Sigmoid colon (tissue), 7 donors: ENCODE measurements at regions of chr3 and their contacts with region 1.

Region 1: DNA sequence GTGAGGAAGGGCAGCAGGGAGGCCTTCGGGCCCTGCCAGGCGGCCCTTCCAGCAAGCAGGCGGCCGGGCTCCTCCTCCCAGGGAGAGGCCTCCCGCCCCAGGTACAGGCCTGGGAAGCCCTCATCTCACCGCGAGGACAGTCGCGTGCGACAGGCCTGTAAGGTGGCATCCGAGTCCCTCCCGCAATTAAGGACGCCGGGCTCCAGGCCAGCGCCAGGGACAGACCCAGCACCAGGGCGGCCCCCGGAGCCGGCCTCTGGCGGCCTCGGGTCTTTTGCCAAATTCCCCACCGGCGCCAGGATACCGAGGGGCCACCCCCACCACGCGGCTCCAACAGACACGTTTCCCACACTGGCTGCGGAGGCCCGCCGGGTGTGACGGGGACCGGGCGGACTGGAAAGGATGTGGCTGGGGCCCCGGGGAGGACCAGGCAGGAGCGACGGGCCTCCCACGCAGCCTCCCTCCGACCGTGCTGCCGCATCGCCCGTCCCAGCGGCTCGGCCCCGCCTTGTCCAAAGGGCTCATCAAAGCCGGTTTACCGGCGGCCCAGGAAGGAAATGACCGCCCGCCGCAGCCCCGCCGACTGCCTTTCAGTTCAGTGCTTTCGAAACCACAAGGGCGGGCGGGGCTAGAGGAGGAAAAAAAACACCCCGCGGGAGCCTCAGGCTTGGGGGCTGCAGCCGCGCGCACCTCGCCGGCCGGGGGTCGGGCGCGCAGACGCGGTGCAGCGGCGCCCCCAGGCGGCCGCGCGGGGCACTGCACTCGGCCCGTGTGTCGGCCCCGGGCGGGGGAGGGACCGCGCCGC is 11.3 kb downstream of the XXYLT1 start:
- DNase-seq: peak; percentile 98
- H3K4me3 ChIP-seq: peak overlapping the region; percentile 61 to 75 (median 68)
- H3K27ac ChIP-seq: peak overlapping the region; percentile 87 to 97 (median 94)
- H3K4me1 ChIP-seq: peaks cover 0 to 39% (median 37%) of the 10 kb centered on the region in 4 donors
- H3K27me3 ChIP-seq: no peaks in the 10 kb centered on the region
- CTCF ChIP-seq: peak in 1 of 4 experiments; percentile 63
- EP300 ChIP-seq: no peak
- POLR2A ChIP-seq: peak; percentile 65 to 66

Region 2: DNA sequence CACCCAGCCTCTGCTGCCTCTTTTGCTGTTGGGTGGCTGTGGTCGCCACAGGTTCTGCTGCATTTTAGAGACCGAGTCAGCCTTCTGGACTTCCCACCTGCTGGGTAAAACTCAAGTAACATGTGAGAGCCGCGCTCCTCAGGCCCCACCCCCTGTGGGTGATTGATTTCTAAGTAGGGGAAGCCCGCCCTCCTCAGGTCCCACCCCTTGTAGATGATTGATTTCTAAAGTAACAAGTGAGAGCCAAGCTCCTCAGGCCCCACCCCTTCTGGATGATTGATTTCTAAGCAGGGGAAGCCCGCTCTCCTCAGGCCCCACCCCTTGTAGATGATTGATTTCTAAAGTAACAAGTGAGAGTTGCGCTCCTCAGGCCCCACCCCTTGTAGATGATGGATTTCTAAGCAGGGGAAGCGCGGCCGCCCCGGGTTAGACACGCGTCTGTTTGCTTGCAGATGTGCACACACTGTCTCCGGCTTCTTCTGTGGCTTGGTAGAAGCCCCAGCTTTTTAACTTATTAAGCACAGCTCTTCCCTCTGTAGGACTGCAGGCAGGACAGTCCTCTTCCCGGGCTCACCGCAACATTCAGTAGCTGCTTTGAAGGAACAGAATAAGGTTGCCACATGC is 490.5 kb before region 1 on chr3:
- intact Hi-C with region 1: loop called (anchors 5 kb)
- DNase-seq: peak; percentile 98
- H3K4me3 ChIP-seq: peak overlapping the region in 3 of 4 donors; percentile 33 to 43 (median 41)
- H3K27ac ChIP-seq: peak overlapping the region; percentile 47 to 60 (median 50)
- H3K4me1 ChIP-seq: peaks cover 0 to 14% (median 10%) of the 10 kb centered on the region in 4 donors
- H3K27me3 ChIP-seq: no peaks in the 10 kb centered on the region
- CTCF ChIP-seq: no peak
- EP300 ChIP-seq: no peak
- POLR2A ChIP-seq: no peak

Region 3: DNA sequence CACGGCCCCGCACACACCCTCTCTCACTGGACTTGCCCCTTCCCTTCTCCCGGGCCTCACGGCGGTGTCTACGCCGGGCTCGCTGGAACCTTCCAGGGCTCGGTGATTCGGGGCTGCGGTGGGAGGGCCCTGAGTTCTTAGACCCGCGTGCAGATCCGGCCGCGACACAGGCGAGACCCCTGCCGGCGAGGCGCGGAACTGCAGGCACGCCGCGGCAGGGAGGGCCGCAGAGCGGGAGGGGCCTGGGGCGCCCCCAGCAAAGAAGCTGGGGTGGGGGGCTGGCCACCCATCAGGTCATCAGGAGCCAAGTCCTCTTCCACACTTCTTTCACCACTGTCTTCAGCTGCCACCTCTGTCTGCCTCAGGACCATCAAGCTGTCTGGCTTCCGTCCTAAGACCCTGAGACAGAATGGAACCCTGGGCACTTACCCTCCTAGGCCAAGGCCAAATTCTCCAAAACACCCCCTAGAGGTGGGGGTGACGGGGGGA is 153.2 kb before region 1 on chr3:
- intact Hi-C with region 1: loop called (anchors 2 kb)
- DNase-seq: peak; percentile 86
- H3K4me3 ChIP-seq: peak overlapping the region in 1 of 4 donors; percentile 25
- H3K27ac ChIP-seq: peak overlapping the region in 2 of 4 donors; percentile 31 to 39
- H3K4me1 ChIP-seq: peaks cover 0 to 30% (median 18%) of the 10 kb centered on the region in 4 donors
- H3K27me3 ChIP-seq: no peaks in the 10 kb centered on the region
- CTCF ChIP-seq: peak; percentile 97 to 100 (median 99)
- EP300 ChIP-seq: no peak
- POLR2A ChIP-seq: no peak

Region 4: GRCh38 chr3:195154793-195155535 is 104.7 kb before region 1 on chr3:
- intact Hi-C with region 1: loop called (anchors 1 kb)
- DNase-seq: peak; percentile 98
- H3K4me3 ChIP-seq: peak overlapping the region in 3 of 4 donors; percentile 22 to 27 (median 27)
- H3K27ac ChIP-seq: peak overlapping the region; percentile 80 to 94 (median 92)
- H3K4me1 ChIP-seq: peaks cover 0 to 90% (median 81%) of the 10 kb centered on the region in 4 donors
- H3K27me3 ChIP-seq: no peaks in the 10 kb centered on the region
- CTCF ChIP-seq: no peak
- EP300 ChIP-seq: peak in 1 of 4 donors; percentile 82
- POLR2A ChIP-seq: no peak

Region 5: GRCh38 chr3:195319060-195319459 is 59.4 kb after region 1 on chr3:
- intact Hi-C with region 1: no loop called
- DNase-seq: no peak
- H3K4me3 ChIP-seq: no peak overlapping the region
- H3K27ac ChIP-seq: no peak overlapping the region
- H3K4me1 ChIP-seq: no peaks in the 10 kb centered on the region
- H3K27me3 ChIP-seq: no peaks in the 10 kb centered on the region
- CTCF ChIP-seq: no peak
- EP300 ChIP-seq: no peak
- POLR2A ChIP-seq: no peak